Activated B cell treated with CpG ODN at 0.5 μM for 24 hours (primary cell): ENCODE measurements at regions of chr13 and their contacts with region 1.

Region 1: DNA sequence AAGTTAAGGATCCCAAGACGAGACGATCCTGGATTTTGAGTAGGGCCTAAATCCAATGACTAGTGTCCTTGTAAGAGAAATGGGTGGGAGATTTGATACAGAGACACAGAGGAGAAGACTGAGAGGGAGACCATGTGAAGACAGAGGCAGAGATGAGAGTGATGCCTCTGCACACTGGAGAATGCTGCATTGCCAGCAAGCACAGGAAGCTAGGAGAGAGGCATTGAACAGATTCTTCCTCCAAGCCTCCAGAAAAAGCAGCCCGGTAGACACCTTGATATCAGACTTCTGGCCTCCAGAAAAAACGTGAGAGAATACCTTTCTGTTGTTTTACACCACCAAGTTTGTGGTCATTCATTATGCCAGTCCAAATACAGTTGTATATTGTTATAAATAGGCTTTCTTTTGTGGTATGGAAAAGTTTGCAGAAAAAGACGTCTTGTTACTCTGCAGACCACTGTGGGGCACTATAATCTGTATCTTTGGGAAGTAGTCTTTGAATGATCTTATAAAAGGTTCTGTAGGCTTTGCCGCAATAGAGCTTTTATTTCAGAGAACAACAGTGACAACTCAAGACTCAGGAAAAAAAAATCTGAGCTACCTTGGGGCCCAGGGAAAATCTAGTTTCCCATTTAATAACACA is 17.9 kb upstream of the RFC3 start:
- DNase-seq: no peak
- ATAC-seq: no peak
- H3K4me3 Mint-ChIP-seq: no peak overlapping the region
- H3K27ac Mint-ChIP-seq: no peak overlapping the region
- H3K4me1 Mint-ChIP-seq: no peaks in the 10 kb centered on the region
- H3K27me3 Mint-ChIP-seq: peaks cover 2% of the 10 kb centered on the region
- CTCF ChIP-seq: no peak

Region 2: GRCh38 chr13:32403108-32403507 is 1397.0 kb before region 1 on chr13:
- CTCF ChIA-PET with region 1: no interaction called
- POLR2A ChIA-PET with region 1: no interaction called
- intact Hi-C with region 1: no loop called
- DNase-seq: no peak
- ATAC-seq: no peak
- H3K4me3 Mint-ChIP-seq: no peak overlapping the region
- H3K27ac Mint-ChIP-seq: no peak overlapping the region
- H3K4me1 Mint-ChIP-seq: no peaks in the 10 kb centered on the region
- H3K27me3 Mint-ChIP-seq: no peaks in the 10 kb centered on the region
- CTCF ChIP-seq: no peak

Region 3: DNA sequence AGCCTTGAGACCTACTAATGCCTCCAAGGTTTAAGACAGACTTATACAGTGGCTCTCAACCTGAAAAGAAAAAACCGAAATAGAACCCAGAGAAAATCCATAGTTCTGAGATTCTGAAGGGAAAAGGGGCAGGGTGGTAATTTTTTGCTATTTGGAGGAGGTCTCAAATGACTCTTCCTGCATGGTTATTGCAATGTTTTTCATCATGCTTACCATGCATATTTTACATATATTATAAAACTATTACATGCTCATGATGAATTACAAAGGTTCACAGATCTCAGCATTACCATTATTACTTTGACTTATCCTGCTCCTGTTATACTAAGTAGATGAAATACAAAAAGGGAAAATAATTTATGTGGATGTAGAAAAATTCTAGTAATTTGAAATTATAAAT is 1309.0 kb before region 1 on chr13:
- CTCF ChIA-PET with region 1: no interaction called
- POLR2A ChIA-PET with region 1: no interaction called
- intact Hi-C with region 1: no loop called
- DNase-seq: no peak
- ATAC-seq: no peak
- H3K4me3 Mint-ChIP-seq: no peak overlapping the region
- H3K27ac Mint-ChIP-seq: no peak overlapping the region
- H3K4me1 Mint-ChIP-seq: no peaks in the 10 kb centered on the region
- H3K27me3 Mint-ChIP-seq: no peaks in the 10 kb centered on the region
- CTCF ChIP-seq: no peak

Region 4: DNA sequence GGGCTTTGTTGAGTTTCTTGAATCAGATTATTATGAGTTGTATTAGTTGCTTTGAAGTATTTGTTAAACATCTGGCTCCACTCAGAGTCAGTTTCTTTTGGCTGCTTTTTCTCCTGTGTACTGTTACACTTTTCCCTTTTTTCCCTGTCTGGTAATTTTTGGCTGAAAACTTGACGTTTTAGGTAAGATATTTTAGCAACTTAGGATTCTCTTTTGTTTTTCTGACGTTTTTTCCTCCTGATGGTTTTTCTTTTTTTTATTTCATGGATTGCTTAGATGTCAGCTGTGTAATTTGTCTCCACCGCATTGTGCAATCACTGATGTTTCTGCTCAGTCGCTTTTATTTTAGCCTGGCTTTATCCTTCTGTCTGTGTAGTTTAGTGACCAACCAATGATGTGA is 38.6 kb after region 1 on chr13:
- CTCF ChIA-PET with region 1: no interaction called
- POLR2A ChIA-PET with region 1: no interaction called
- intact Hi-C with region 1: no loop called
- DNase-seq: no peak
- ATAC-seq: no peak
- H3K4me3 Mint-ChIP-seq: no peak overlapping the region
- H3K27ac Mint-ChIP-seq: no peak overlapping the region
- H3K4me1 Mint-ChIP-seq: no peaks in the 10 kb centered on the region
- H3K27me3 Mint-ChIP-seq: no peaks in the 10 kb centered on the region
- CTCF ChIP-seq: no peak

Region 5: DNA sequence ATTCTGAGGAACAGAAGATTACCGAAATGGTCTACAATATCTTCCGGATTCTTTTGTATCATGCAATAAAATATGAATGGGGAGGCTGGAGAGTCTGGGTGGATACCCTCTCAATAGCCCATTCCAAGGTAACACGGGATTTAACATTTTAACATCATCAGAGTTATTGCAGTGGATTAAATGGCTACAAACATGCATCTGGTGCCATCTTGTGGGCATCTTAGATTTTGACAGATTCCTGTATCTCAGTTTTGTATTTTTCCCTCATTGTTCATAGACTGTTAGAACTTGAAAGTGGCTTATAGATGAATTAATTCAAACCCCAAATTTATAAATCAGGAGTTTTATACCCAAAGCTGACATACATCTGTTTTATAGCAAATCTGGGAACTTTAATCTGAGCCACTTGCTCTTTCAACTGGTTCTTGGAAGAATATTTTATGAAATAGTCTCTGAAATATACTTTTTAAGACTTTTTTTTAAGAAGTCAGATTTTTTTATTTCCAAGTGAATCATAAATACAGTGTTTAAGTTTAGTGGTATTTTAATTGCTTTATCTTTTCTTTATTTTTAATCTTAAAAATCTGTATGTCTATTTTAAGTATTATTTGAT is 1357.2 kb after region 1 on chr13:
- CTCF ChIA-PET with region 1: no interaction called
- POLR2A ChIA-PET with region 1: no interaction called
- intact Hi-C with region 1: loop called (anchors 1 kb)
- DNase-seq: no peak
- ATAC-seq: no peak
- H3K4me3 Mint-ChIP-seq: no peak overlapping the region
- H3K27ac Mint-ChIP-seq: no peak overlapping the region
- H3K4me1 Mint-ChIP-seq: peaks cover 1% of the 10 kb centered on the region
- H3K27me3 Mint-ChIP-seq: no peaks in the 10 kb centered on the region
- CTCF ChIP-seq: peak; percentile 42